WTC11 (cell line): ENCODE measurements at regions of chr15 and their contacts with region 1.

Region 1: GRCh38 chr15:84929744-84930371 is 45.4 kb downstream of the SLC28A1 start:
- DNase-seq: no peak
- ATAC-seq: no peak
- H3K4me3 Mint-ChIP-seq: no peak overlapping the region
- H3K27ac Mint-ChIP-seq: no peak overlapping the region
- H3K4me1 Mint-ChIP-seq: peaks cover 7% of the 10 kb centered on the region
- H3K27me3 Mint-ChIP-seq: no peaks in the 10 kb centered on the region
- CTCF ChIP-seq: no peak

Region 2: GRCh38 chr15:84818261-84819131 is 111.4 kb before region 1 on chr15:
- CTCF ChIA-PET with region 1: interaction called, 10 read pairs
- POLR2A ChIA-PET with region 1: no interaction called
- DNase-seq: peak; percentile 47
- ATAC-seq: peak; percentile 10
- H3K4me3 Mint-ChIP-seq: peak overlapping the region; percentile 72
- H3K27ac Mint-ChIP-seq: peak overlapping the region; percentile 91
- H3K4me1 Mint-ChIP-seq: peaks cover 43% of the 10 kb centered on the region
- H3K27me3 Mint-ChIP-seq: peaks cover 7% of the 10 kb centered on the region
- CTCF ChIP-seq: no peak

Region 3: DNA sequence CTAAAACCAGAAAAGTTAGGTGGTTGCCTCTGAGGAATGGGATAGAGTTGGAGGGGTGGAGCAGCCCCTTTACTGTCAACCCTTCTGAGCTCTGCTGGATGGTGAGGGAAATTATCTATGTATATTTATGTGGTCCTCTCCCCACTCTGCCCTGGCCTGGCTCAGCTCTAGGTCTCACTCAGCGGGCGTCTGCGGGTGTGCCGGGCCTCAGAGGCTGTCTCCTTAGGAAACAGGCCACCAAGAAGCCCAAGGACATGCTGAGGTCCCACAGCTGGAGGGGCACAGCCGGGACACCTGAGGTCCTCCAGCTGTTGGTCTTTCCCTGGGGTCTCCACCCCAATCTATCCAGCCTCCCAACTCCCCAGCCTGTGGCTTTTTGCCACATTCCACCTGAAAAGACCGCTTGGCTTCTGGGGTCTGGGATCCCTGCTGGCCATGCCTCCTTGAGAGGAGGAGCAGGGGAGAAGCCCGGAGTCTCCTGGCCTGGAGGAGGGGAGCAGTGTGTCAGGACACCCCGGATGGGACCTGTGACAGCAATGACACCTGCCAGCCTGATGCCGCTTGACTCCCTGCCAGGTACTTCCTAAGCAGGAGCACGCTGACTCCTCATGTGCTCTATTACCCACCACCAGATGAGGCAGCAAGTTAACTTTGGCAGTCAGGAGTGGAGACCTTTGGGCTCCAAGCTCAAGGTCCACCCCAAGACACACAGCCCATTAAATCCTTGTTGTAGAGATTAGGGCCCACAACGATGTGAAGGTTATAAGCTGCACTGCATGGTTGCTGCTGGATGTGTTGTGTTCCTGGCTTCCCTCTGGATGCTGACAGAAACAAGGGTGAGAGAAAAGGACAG is 45.7 kb before region 1 on chr15 and contains the start of gene SLC28A1:
- CTCF ChIA-PET with region 1: interaction called, 24 read pairs
- POLR2A ChIA-PET with region 1: interaction called, 4 read pairs
- DNase-seq: no peak
- ATAC-seq: no peak
- H3K4me3 Mint-ChIP-seq: no peak within 1 kb of the TSS
- H3K27ac Mint-ChIP-seq: peak within 1 kb of the TSS; percentile 1; the same call in 1 of the 2 replicates
- H3K4me1 Mint-ChIP-seq: peaks cover 6% of the 10 kb centered on the region
- H3K27me3 Mint-ChIP-seq: no peaks in the 10 kb centered on the region
- CTCF ChIP-seq: no peak
- total RNA-seq, gene SLC28A1: 0.14 to 0.16 TPM in 2 of 3 replicates, not detected in the other

Region 4: DNA sequence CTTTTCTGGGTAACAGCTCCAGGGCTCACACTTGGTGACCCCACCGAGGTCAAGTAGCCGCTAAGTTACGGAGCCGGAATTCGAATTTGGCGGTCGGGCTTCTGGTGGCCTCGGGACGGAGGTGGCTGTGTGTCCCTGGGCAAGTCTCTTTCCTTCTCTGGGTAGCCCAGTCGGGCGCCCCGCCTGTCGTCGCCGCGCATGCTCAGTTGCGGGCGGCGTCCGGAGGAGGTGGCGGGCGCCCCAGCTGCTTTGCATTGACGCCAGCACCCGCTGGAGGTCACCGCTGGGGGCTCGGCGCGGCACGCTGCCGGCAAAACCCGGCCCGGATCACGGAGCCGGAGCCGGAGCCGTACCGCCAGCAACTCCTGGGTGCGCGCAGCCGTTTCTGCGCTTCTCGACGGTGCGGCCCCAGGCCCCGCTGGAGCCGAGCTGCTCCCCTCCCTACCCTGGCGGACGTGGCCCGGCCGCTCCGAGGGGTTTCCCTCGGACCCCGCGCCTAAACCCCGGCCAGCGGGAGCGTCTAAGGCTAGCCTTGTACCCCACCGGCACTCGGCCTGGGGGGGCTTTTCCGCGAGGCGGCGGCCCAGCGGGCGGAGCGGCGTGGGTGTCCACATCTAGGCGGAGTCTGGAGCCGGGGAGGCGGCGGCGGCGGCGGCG is 51.3 kb after region 1 on chr15:
- CTCF ChIA-PET with region 1: interaction called, 21 read pairs
- POLR2A ChIA-PET with region 1: no interaction called
- DNase-seq: peak; percentile 94
- ATAC-seq: peak; percentile 69
- H3K4me3 Mint-ChIP-seq: peak overlapping the region; percentile 89
- H3K27ac Mint-ChIP-seq: no peak overlapping the region; the same call in 1 of the 2 replicates
- H3K4me1 Mint-ChIP-seq: peaks cover 29% of the 10 kb centered on the region
- H3K27me3 Mint-ChIP-seq: peaks cover 54% of the 10 kb centered on the region
- CTCF ChIP-seq: no peak

Region 5: DNA sequence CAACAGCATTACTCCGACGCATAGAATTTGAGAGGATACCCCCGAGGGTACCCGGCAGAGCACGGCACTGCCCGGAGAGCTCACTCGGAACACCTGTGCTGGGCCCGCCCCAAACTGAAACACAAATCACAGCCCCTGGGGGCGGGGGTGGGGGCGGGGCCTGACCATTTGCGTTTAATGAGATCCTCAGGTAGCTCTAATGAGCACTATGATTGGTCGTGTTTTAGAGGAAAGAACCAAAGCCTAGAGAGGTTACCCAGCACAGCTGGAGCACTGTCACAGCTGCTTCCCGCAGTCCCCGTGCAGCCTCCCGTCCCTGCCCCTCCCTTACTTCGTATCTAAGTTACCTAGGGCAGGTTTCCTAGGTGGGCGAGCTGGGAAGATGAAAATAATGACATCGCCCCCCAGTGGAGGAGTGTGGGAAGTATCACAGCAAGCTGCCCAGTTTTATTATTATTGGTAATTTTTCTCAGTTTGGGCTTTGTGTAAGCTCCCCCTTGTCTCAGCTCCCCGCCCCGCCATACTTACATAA is 238.8 kb after region 1 on chr15:
- CTCF ChIA-PET with region 1: interaction called, 11 read pairs
- POLR2A ChIA-PET with region 1: no interaction called
- DNase-seq: peak; percentile 83
- ATAC-seq: peak; percentile 98
- H3K4me3 Mint-ChIP-seq: peak overlapping the region; percentile 64
- H3K27ac Mint-ChIP-seq: no peak overlapping the region
- H3K4me1 Mint-ChIP-seq: peaks cover 12% of the 10 kb centered on the region
- H3K27me3 Mint-ChIP-seq: peaks cover 7% of the 10 kb centered on the region; the same call in 1 of the 2 replicates
- CTCF ChIP-seq: peak; percentile 69